HEK293T (cell line): ENCODE measurements at regions of chr3 and their contacts with region 1.

Region 1: DNA sequence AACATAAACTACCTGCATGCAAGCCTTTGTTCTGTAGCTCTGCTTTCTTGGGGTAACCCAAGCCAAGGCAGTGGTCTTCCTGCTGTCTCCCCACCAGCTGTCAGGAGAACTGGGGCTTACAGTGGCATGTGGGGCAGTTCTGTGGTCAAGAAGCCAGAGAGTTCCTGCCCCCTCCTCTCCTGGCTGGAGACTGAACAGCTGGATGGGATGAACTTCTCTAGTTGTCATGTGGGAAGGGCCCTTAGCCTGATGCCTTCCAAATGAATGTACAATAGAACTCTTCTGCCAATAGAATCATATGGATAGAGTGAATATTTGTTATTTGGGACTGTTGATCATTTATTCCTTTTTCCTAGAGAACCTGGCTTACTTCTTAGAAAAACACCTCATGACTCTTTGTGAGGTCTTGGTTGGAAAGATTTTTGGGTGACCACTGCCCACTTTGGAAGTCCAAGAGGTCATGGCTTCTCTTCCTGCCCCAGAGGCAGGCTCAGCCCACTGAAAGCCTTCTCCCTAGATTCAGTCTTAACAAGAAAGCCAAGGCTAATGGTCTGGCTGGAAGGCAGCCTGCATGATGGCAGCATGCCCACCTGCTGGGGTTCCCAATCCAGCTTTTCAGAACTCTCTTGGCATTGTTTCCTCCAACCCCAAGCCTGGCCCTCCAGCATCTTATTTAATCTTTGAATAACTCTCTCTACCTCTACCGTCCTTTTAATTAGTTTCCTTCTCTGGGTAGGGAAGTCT is 462.9 kb upstream of the PROK2 start:
- DNase-seq: no peak

Region 2: DNA sequence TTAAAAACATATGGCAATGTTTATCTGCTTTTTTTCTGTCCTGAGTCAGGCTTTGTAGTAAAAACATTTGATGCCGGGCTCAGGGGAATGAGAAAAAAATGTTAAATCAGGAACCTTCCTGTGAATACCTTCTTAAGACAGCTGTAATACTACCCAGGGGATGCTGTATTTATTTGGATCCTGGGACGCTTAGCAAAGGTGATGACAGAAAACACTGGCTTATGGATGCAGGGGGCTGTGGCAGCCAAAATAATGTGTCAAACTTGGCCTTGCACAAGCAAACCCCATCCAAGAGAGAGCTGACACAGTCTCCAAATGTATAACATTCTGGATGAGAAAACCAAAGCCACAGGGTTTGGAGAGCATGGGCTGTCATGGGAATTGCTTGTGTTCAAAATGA is 24.7 kb before region 1 on chr3:
- CTCF ChIA-PET with region 1: no interaction called
- POLR2A ChIA-PET with region 1: no interaction called
- DNase-seq: no peak

Region 3: DNA sequence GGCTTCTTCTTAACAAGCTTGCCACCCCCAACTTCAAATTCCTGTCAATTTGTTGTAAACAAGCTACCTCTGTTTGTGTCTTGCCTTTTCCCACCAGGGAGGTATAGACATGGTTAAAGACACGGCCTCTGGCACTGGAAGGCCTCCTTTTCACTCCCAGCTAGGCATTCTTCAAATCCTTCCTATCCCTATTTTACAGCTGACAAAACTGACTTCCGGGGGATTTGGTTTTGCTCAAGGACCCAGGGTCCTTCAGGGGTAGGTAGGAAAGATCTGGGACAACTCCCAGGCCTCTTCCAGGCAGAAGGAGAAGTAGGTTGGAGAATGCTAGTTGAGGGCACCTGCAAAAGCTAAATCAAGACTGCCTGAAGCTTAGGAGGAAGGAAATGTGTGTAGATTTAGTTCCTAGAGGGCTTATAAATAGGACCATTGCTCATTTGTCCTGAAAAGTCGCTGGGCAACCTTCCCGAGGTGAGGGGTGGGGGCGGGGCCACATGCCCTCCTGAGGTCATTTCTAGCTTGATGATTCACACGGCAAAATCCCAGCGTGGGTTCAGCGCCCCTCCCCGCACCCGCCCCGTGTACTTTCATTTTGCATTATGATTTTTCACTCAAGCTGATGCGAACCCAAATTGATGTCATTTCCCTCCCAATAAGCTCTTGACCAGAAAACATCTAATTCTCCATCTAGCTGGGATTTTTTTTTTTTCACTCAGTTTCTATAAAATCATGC is 234.9 kb after region 1 on chr3:
- CTCF ChIA-PET with region 1: interaction called, 12 read pairs
- POLR2A ChIA-PET with region 1: no interaction called
- DNase-seq: peak; percentile 35